CD8-positive, alpha-beta T cell (primary cell): ENCODE measurements at regions of chr14 and their contacts with region 1.

Region 1: DNA sequence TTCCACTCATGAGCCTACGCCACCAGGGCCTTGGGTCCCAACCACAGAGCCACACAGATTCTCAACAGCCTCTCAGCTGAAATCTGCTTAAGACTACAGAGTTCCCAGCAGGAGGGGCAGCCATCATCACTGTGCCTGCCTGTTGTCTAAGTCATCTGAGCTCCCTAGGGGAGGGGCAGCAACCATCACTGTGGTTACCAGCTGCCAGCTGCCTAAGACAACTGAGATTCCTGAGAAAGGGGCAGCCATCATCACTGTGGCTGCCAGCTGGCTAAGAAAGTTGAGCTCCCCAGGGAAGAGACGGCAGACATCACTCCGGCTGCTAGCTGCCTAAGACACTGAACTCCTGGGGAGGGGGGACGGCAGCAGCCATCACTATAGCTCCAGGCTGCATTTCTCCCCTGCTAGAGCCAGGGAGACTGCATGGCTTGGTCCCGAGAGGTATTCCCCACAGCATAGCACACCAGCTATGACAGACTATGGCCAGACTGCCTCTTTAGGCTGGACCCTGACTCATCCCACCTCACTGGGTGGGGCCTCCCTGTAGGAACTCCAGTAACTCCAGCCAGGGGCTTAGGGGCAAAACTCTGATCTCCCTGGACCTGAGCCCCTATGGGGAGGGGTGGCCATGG is 37.2 kb upstream of the C14orf132 start:
- DNase-seq: no peak
- ATAC-seq: no peak
- H3K4me3 ChIP-seq: no peak overlapping the region
- H3K4me3 Mint-ChIP-seq: no peak overlapping the region
- H3K27ac ChIP-seq: no peak overlapping the region
- H3K27ac Mint-ChIP-seq: no peak overlapping the region
- H3K4me1 ChIP-seq: no peaks in the 10 kb centered on the region
- H3K4me1 Mint-ChIP-seq: no peaks in the 10 kb centered on the region
- H3K27me3 ChIP-seq: peaks cover 4 to 13% of the 10 kb centered on the region in 2 experiments
- H3K27me3 Mint-ChIP-seq: peaks cover 54% of the 10 kb centered on the region
- CTCF ChIP-seq: no peak

Region 2: DNA sequence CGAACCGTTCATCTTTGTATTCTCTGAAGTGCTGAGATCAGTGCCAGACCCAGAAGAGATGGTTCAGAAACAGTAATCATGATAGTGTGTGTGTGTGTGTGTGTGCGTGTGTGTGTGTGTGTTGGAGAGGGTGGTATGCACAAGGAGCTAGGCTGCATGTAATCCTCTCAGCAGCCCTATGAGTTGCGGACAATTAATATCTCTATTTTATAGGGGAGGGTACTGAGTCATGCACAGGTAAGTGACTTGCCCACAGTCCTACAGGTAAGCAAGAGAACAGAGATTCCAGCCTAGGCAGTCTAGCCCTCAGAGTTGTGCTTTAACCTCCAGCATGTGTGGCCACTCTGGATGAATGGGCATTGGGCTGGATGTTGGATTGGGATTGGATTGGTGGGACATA is 260.2 kb before region 1 on chr14:
- CTCF ChIA-PET with region 1: no interaction called
- POLR2A ChIA-PET with region 1: no interaction called
- intact Hi-C with region 1: no loop called
- DNase-seq: no peak
- ATAC-seq: no peak
- H3K4me3 ChIP-seq: no peak overlapping the region
- H3K4me3 Mint-ChIP-seq: no peak overlapping the region
- H3K27ac ChIP-seq: no peak overlapping the region
- H3K27ac Mint-ChIP-seq: no peak overlapping the region
- H3K4me1 ChIP-seq: peaks cover 5% of the 10 kb centered on the region
- H3K4me1 Mint-ChIP-seq: peaks cover 11% of the 10 kb centered on the region
- H3K27me3 ChIP-seq: no peaks in the 10 kb centered on the region
- H3K27me3 Mint-ChIP-seq: peaks cover 4% of the 10 kb centered on the region
- CTCF ChIP-seq: no peak

Region 3: GRCh38 chr14:96035456-96035855 is 33.5 kb after region 1 on chr14:
- CTCF ChIA-PET with region 1: no interaction called
- POLR2A ChIA-PET with region 1: no interaction called
- intact Hi-C with region 1: loop called in 1 of 2 experiments (anchors 1 kb)
- DNase-seq: no peak
- ATAC-seq: no peak
- H3K4me3 ChIP-seq: no peak overlapping the region
- H3K4me3 Mint-ChIP-seq: no peak overlapping the region
- H3K27ac ChIP-seq: no peak overlapping the region
- H3K27ac Mint-ChIP-seq: no peak overlapping the region
- H3K4me1 ChIP-seq: peaks cover 5% of the 10 kb centered on the region
- H3K4me1 Mint-ChIP-seq: peaks cover 17% of the 10 kb centered on the region
- H3K27me3 ChIP-seq: peaks cover 0 to 11% of the 10 kb centered on the region in 2 experiments
- H3K27me3 Mint-ChIP-seq: peaks cover 32% of the 10 kb centered on the region
- CTCF ChIP-seq: no peak

Region 4: GRCh38 chr14:96246535-96246839 is 244.5 kb after region 1 on chr14:
- CTCF ChIA-PET with region 1: no interaction called
- POLR2A ChIA-PET with region 1: no interaction called
- intact Hi-C with region 1: no loop called
- DNase-seq: no peak
- ATAC-seq: no peak
- H3K4me3 ChIP-seq: no peak overlapping the region
- H3K4me3 Mint-ChIP-seq: no peak overlapping the region
- H3K27ac ChIP-seq: no peak overlapping the region
- H3K27ac Mint-ChIP-seq: no peak overlapping the region
- H3K4me1 ChIP-seq: no peaks in the 10 kb centered on the region
- H3K4me1 Mint-ChIP-seq: no peaks in the 10 kb centered on the region
- H3K27me3 ChIP-seq: no peaks in the 10 kb centered on the region
- H3K27me3 Mint-ChIP-seq: peaks cover 24% of the 10 kb centered on the region
- CTCF ChIP-seq: no peak